ENCODE measurements at regions of chr4 and their contacts with region 1.

Region 1: DNA sequence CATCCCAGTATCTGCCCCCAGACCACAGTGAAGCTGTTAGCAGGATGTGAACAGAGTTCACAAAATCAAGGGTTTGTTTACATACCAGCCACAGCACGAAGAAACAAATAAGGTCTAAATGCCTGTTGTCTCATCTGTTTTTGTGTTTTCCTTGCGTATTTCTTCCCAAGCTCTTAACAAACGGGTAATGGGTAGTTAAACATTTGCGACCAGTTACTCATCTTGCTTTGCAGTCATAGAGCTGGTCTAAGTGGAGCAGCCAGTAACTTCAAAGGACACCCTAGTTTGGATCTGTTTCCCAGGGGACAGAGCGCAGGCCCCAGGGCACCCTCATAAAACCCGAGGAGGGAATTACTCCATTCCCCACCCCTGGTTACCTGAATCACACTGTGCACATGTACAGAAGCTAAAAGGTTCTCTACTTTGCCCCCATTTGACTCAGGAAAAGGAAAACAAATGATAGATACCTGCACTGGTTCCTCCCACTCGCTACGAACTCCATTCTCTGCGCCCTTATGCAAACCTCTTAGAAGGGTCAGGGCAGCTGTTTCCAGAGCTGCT is 68.8 kb downstream of the MAML3 start:
- DNase-seq: peak; percentile 70 to 75
- H3K4me3 ChIP-seq: no peak overlapping the region
- H3K4me3 Mint-ChIP-seq: peak overlapping the region; percentile 56
- H3K27ac Mint-ChIP-seq: peak overlapping the region; percentile 82
- H3K4me1 ChIP-seq: peaks cover 61% of the 10 kb centered on the region
- H3K4me1 Mint-ChIP-seq: peaks cover 69% of the 10 kb centered on the region
- H3K27me3 ChIP-seq: no peaks in the 10 kb centered on the region
- H3K27me3 Mint-ChIP-seq: no peaks in the 10 kb centered on the region
- CTCF ChIP-seq: no peak

Region 2: GRCh38 chr4:139700568-139700967 is 384.6 kb before region 1 on chr4:
- CTCF ChIA-PET with region 1: no interaction called
- POLR2A ChIA-PET with region 1: no interaction called
- intact Hi-C with region 1: no loop called
- DNase-seq: no peak
- H3K4me3 ChIP-seq: no peak overlapping the region
- H3K4me3 Mint-ChIP-seq: no peak overlapping the region
- H3K27ac Mint-ChIP-seq: no peak overlapping the region
- H3K4me1 ChIP-seq: 0 out of 2 replicates have a peak, but pooled peaks cover 14% of the 10 kb centered on the region
- H3K4me1 Mint-ChIP-seq: peaks cover 20% of the 10 kb centered on the region
- H3K27me3 ChIP-seq: no peaks in the 10 kb centered on the region
- H3K27me3 Mint-ChIP-seq: no peaks in the 10 kb centered on the region
- CTCF ChIP-seq: no peak

Region 3: GRCh38 chr4:140018931-140019618 is 66.1 kb before region 1 on chr4:
- CTCF ChIA-PET with region 1: no interaction called
- POLR2A ChIA-PET with region 1: interaction called, 5 read pairs
- intact Hi-C with region 1: loop called (anchors 5 kb)
- DNase-seq: peak; percentile 44 to 52
- H3K4me3 ChIP-seq: no peak overlapping the region
- H3K4me3 Mint-ChIP-seq: peak overlapping the region; percentile 60
- H3K27ac Mint-ChIP-seq: peak overlapping the region; percentile 66
- H3K4me1 ChIP-seq: peaks cover 50% of the 10 kb centered on the region
- H3K4me1 Mint-ChIP-seq: peaks cover 54% of the 10 kb centered on the region
- H3K27me3 ChIP-seq: no peaks in the 10 kb centered on the region
- H3K27me3 Mint-ChIP-seq: no peaks in the 10 kb centered on the region
- CTCF ChIP-seq: no peak

Region 4: DNA sequence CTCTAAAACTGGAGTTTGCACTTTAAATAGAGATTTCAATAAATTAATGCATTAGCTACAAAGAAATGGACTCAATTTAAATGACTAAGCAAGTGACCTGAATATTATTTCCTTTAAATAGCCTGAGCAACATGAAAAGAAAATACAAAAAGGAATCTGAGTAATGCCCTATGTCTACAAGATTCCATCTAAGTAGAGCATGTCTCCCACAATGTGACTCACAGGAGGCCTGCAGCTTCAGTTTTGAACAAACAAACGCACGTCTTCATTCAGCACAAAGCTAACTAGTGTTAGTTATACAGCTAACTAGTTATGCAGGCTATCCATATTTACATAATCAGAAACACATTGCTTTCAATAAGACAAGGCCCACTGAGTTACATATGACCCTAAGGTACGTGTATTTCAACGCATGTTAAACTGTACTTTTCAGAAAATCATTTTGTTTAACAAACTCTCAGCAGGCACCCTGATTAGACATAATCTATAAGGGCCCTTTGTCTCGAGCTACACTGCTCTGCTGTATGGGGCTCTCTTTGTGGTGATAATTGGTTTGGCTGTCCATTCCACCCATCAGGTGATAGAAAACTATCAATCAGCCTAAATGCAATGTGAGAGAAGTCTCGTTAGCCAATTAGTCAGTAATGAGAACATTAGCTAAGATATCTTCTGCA is 47.6 kb before region 1 on chr4:
- CTCF ChIA-PET with region 1: interaction called, 3 read pairs
- POLR2A ChIA-PET with region 1: no interaction called
- intact Hi-C with region 1: loop called (anchors 1 kb)
- DNase-seq: peak; percentile 68 to 80
- H3K4me3 ChIP-seq: no peak overlapping the region
- H3K4me3 Mint-ChIP-seq: peak overlapping the region; percentile 8
- H3K27ac Mint-ChIP-seq: peak overlapping the region; percentile 16
- H3K4me1 ChIP-seq: peaks cover 44% of the 10 kb centered on the region
- H3K4me1 Mint-ChIP-seq: peaks cover 44% of the 10 kb centered on the region
- H3K27me3 ChIP-seq: no peaks in the 10 kb centered on the region
- H3K27me3 Mint-ChIP-seq: no peaks in the 10 kb centered on the region
- CTCF ChIP-seq: no peak

Region 5: DNA sequence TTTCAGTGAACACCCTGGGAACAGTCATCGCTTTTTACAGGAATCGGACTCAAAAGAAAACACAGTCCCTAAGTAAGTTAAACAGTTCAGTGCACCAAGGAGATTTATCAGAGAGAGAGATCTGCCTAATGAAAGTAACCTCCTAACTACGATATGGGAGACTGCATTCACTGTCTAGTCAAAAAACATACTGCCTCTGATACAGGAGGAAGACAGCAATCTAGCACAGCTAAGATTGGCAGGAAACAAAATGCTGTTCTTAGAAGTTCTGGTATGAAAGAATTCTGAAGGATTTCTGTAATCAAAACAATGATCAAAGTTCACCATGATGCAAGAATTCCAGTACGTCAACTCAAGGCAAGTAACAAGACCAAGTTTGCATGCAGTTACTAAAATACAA is 23.9 kb before region 1 on chr4:
- CTCF ChIA-PET with region 1: no interaction called
- POLR2A ChIA-PET with region 1: no interaction called
- intact Hi-C with region 1: loop called (anchors 1 kb)
- DNase-seq: peak in 1 of 2 experiments; percentile 41
- H3K4me3 ChIP-seq: no peak overlapping the region
- H3K4me3 Mint-ChIP-seq: peak overlapping the region; percentile 38
- H3K27ac Mint-ChIP-seq: peak overlapping the region; percentile 62
- H3K4me1 ChIP-seq: peaks cover 61% of the 10 kb centered on the region
- H3K4me1 Mint-ChIP-seq: peaks cover 48% of the 10 kb centered on the region
- H3K27me3 ChIP-seq: no peaks in the 10 kb centered on the region
- H3K27me3 Mint-ChIP-seq: no peaks in the 10 kb centered on the region
- CTCF ChIP-seq: no peak

Region 6: DNA sequence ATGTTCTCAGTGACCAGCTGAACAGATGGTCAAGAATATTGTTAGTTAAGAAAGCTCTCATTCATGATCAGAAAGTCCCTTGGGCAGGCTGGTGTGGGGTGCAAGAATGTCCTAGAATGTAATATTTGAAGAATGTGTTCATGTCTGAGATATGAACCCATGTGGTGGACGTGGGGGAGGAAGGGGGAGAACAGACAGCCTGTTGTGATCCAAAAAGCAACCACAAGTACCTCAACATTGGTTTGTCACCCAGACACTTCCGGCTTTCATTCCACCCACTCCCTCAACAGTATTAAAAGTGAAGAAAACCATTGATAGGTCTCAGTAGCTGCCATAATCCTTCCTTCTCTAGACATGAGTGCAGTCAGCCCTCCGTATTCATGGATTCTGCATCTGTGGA is 13.3 kb before region 1 on chr4:
- CTCF ChIA-PET with region 1: no interaction called
- POLR2A ChIA-PET with region 1: no interaction called
- intact Hi-C with region 1: loop called (anchors 2 kb)
- DNase-seq: no peak
- H3K4me3 ChIP-seq: no peak overlapping the region
- H3K4me3 Mint-ChIP-seq: no peak overlapping the region
- H3K27ac Mint-ChIP-seq: no peak overlapping the region
- H3K4me1 ChIP-seq: peaks cover 11% of the 10 kb centered on the region
- H3K4me1 Mint-ChIP-seq: peaks cover 28% of the 10 kb centered on the region
- H3K27me3 ChIP-seq: no peaks in the 10 kb centered on the region
- H3K27me3 Mint-ChIP-seq: no peaks in the 10 kb centered on the region
- CTCF ChIP-seq: no peak

Region 7: GRCh38 chr4:140109737-140110136 is 24.6 kb after region 1 on chr4:
- CTCF ChIA-PET with region 1: no interaction called
- POLR2A ChIA-PET with region 1: no interaction called
- intact Hi-C with region 1: loop called (anchors 2 kb)
- DNase-seq: no peak
- H3K4me3 ChIP-seq: no peak overlapping the region
- H3K4me3 Mint-ChIP-seq: no peak overlapping the region
- H3K27ac Mint-ChIP-seq: no peak overlapping the region
- H3K4me1 ChIP-seq: peaks cover 33% of the 10 kb centered on the region
- H3K4me1 Mint-ChIP-seq: peaks cover 21% of the 10 kb centered on the region
- H3K27me3 ChIP-seq: no peaks in the 10 kb centered on the region
- H3K27me3 Mint-ChIP-seq: no peaks in the 10 kb centered on the region
- CTCF ChIP-seq: no peak